Psoas muscle (tissue), 8 donors: ENCODE measurements at regions of chr9 and their contacts with region 1.

Region 1: DNA sequence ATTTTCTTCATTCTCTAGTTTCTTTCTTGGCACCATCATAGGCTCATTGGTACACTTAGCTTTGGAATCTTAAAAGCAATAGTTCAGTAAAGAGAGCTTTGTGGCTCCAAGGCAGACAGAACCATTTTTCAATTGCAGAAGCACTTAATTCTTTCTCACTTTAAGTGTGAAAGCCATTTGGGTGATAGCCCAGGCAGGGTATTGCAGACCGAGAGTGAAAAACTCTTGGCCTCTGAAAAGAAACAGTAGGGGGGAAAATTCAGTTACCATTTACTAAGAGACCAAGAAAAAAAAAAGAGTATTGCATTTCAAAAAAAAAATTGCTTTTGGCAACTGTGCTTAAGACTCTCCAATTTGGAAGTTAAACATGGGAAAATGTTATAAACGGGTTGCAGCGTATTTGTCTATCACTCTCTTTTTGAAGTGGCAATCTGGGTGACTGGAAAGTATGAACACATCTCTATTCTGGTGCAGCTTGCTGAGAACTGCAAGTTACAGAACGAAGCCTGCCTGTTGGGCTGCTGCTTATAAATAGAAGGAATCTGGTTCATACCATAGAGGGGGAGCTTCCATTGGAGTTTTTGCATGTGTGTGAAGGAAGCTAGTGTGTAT is 170.5 kb downstream of the TLE4 start:
- DNase-seq: no peak
- ATAC-seq: peak in 3 of 4 donors; percentile 19 to 77 (median 58)
- H3K4me3 ChIP-seq: no peak overlapping the region
- H3K27ac ChIP-seq: no peak overlapping the region
- H3K4me1 ChIP-seq: no peaks in the 10 kb centered on the region
- H3K27me3 ChIP-seq: no peaks in the 10 kb centered on the region
- CTCF ChIP-seq: no peak

Region 2: GRCh38 chr9:79477955-79478771 is 264.1 kb before region 1 on chr9:
- intact Hi-C with region 1: loop called in 1 of 2 experiments (anchors 10 kb)
- DNase-seq: no peak
- ATAC-seq: peak in 1 of 4 donors; percentile 51
- H3K4me3 ChIP-seq: no peak overlapping the region
- H3K27ac ChIP-seq: no peak overlapping the region
- H3K4me1 ChIP-seq: no peaks in the 10 kb centered on the region
- H3K27me3 ChIP-seq: no peaks in the 10 kb centered on the region
- CTCF ChIP-seq: peak; percentile 35

Region 3: GRCh38 chr9:79682076-79682736 is 60.0 kb before region 1 on chr9:
- intact Hi-C with region 1: no loop called
- DNase-seq: no peak
- ATAC-seq: peak; percentile 68 to 78 (median 72)
- H3K4me3 ChIP-seq: no peak overlapping the region
- H3K27ac ChIP-seq: peak overlapping the region; percentile 24
- H3K4me1 ChIP-seq: peaks cover 31% of the 10 kb centered on the region
- H3K27me3 ChIP-seq: no peaks in the 10 kb centered on the region
- CTCF ChIP-seq: no peak

Region 4: DNA sequence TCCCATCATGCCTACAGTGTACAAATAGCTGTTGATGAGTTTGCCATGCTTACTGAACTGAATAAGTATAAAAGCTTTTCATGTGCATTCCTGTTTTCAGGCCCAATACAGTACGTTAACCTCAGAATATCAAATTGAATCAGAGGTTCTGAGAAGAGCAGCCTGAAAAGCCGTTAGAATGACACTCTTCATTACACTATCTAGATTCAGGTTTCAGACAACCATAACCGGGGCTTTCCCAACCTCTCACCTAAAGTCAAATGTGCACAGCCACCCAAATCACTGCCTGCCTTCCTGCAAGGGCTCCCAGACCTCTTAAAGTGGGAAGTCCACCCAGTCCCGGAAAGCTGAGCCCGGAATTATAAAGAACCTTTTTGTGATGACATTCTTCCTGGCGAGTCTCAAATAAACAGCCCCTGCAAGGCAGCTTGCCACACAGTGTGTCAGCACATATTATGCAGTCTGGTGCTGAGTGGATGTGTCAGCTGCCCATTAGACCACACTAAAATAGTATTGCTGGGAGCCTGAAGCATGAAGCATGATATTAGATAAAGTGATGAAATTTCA is 75.3 kb after region 1 on chr9:
- intact Hi-C with region 1: no loop called
- DNase-seq: peak; percentile 39 to 58
- ATAC-seq: peak; percentile 86 to 96 (median 93)
- H3K4me3 ChIP-seq: no peak overlapping the region
- H3K27ac ChIP-seq: peak overlapping the region; percentile 31
- H3K4me1 ChIP-seq: peaks cover 13% of the 10 kb centered on the region
- H3K27me3 ChIP-seq: no peaks in the 10 kb centered on the region
- CTCF ChIP-seq: no peak